GM12878 (cell line): ENCODE measurements at regions of chr2 and their contacts with region 1.

Region 1: GRCh38 chr2:109213646-109214417 is 84.8 kb downstream of the SH3RF3 start:
- DNase-seq: peak; percentile 82
- ATAC-seq: peak; percentile 77
- H3K4me3 ChIP-seq: no peak overlapping the region
- H3K27ac ChIP-seq: no peak overlapping the region
- H3K4me1 ChIP-seq: peaks cover 39% of the 10 kb centered on the region
- H3K27me3 ChIP-seq: no peaks in the 10 kb centered on the region; a peak in 1 of 4 replicates
- CTCF ChIP-seq: no peak
- EP300 ChIP-seq: peak; percentile 77 to 92; a peak in 2 of 4 replicates
- POLR2A ChIP-seq: no peak
- RAD21 ChIP-seq: no peak

Region 2: DNA sequence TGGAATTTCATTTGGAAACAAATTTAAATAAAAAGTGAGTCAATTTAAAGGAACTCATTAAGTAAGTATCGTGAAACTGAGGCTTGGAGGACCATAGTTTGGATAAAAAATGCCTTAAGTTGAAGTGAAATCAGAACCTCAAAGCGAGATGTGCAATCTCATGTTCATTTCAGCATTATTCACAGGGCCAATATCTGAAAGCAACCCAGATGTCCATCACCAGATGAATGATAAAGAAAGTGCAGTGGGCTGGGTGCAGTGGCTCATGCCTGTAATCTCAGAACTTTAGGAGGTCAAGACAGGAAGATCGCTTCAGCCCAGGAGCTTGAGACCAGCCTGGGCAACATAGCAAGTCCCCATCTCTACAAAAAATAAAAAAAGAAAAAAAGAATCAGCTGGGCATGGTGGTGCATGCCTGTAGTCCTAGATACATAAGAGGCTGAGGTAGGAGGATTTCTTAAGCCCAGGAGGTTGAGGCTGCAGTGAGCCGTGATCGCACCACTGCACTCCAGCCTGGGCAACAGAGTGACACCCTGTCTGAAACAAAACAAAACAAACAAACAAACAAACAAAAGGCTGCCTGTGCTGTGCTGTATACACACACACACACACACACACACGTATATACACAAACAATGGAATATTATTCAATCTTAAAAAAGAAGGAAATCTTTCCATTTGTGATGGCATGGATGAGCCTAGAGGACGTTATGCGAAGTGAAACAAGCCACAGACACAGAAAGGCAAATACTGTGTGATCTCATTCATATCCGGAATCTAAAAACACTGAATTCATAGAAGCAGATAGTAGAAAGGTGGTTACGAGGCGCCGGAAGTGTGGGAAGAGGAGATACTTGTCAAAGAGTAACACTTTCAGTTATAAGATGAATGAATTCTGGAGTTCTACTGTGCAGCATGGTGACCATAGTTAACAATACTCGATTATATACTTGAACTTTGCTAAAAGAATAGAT is 70.3 kb before region 1 on chr2:
- CTCF ChIA-PET with region 1: interaction called, 4 read pairs
- POLR2A ChIA-PET with region 1: interaction called, 3 read pairs
- RAD21 ChIA-PET with region 1: interaction called, 7 read pairs
- SMC1A ChIA-PET with region 1: interaction called, 8 read pairs
- in situ Hi-C with region 1: no loop called
- intact Hi-C with region 1: loop called (anchors 2 kb)
- DNase-seq: peak; percentile 66
- ATAC-seq: peak; percentile 92
- H3K4me3 ChIP-seq: peak overlapping the region; percentile 38; the same call in 1 of the 2 replicates
- H3K27ac ChIP-seq: no peak overlapping the region; the same call in 1 of the 2 replicates
- H3K4me1 ChIP-seq: peaks cover 27% of the 10 kb centered on the region
- H3K27me3 ChIP-seq: peaks cover 0 to 3% of the 10 kb centered on the region in 2 experiments; a peak in 2 of 4 replicates
- CTCF ChIP-seq: no peak
- EP300 ChIP-seq: peak; percentile 56 to 80; a peak in 3 of 4 replicates
- POLR2A ChIP-seq: no peak
- RAD21 ChIP-seq: 0 out of 2 replicates have a peak, but pooled peaks have one; percentile 5

Region 3: DNA sequence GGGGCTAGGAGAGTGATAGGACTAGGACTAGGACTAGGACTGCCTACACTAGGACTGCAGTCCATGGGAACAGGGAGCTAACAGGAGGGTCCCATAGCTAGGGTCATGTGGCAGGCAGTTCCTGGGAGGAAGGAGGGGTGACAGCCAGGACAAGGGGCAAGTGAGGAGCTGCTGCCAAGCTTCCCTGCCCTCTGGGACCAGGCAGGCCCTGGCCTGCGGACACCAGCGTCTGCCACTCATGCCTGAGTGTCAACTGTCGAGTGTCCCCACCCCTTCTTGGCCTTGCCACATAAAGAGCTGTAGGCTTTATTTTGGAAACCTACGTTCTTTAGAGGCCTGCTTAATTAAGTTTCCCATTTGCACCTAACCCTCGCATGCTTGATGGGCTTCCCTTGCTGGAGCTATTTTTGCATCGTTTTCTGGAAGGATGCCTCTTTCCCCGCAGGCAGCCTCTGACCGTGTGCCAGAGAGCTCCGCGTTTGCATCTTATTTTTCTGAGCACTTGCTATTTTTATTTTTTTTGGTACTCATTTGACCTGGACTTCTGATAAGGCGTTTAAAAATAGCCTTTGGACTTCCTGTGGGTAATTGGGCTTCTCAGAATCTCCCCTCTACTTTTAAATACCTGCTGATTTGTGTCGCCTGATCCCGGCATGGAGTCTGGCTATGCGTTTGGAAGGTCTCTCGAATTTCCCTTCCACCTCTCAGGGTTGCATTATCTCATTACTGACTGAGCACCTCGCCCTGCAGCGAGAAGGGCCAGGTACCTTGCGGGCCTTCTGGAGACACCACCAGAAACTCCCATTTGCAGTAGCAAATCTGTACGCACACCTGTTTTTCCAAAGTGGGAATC is 18.4 kb before region 1 on chr2:
- CTCF ChIA-PET with region 1: interaction called, 6 read pairs
- POLR2A ChIA-PET with region 1: interaction called, 3 read pairs
- RAD21 ChIA-PET with region 1: interaction called, 8 read pairs
- SMC1A ChIA-PET with region 1: interaction called, 13 read pairs
- in situ Hi-C with region 1: no loop called
- intact Hi-C with region 1: no loop called
- DNase-seq: no peak
- ATAC-seq: peak; percentile 20
- H3K4me3 ChIP-seq: no peak overlapping the region
- H3K27ac ChIP-seq: no peak overlapping the region
- H3K4me1 ChIP-seq: peaks cover 28% of the 10 kb centered on the region
- H3K27me3 ChIP-seq: no peaks in the 10 kb centered on the region
- CTCF ChIP-seq: no peak
- EP300 ChIP-seq: no peak
- POLR2A ChIP-seq: no peak
- RAD21 ChIP-seq: no peak

Region 4: GRCh38 chr2:109230941-109231420 is 17.1 kb after region 1 on chr2:
- CTCF ChIA-PET with region 1: interaction called, 13 read pairs
- POLR2A ChIA-PET with region 1: interaction called, 5 read pairs
- RAD21 ChIA-PET with region 1: interaction called, 20 read pairs
- SMC1A ChIA-PET with region 1: interaction called, 41 read pairs
- in situ Hi-C with region 1: no loop called
- intact Hi-C with region 1: no loop called
- DNase-seq: no peak
- ATAC-seq: 0 out of 3 replicates have a peak, but pooled peaks have one; percentile 10
- H3K4me3 ChIP-seq: no peak overlapping the region
- H3K27ac ChIP-seq: no peak overlapping the region
- H3K4me1 ChIP-seq: peaks cover 15% of the 10 kb centered on the region
- H3K27me3 ChIP-seq: no peaks in the 10 kb centered on the region
- CTCF ChIP-seq: no peak
- EP300 ChIP-seq: no peak
- POLR2A ChIP-seq: no peak
- RAD21 ChIP-seq: no peak

Region 5: GRCh38 chr2:109238580-109238979 is 24.7 kb after region 1 on chr2:
- CTCF ChIA-PET with region 1: interaction called, 5 read pairs
- POLR2A ChIA-PET with region 1: interaction called, 8 read pairs
- RAD21 ChIA-PET with region 1: interaction called, 25 read pairs
- SMC1A ChIA-PET with region 1: interaction called, 41 read pairs
- in situ Hi-C with region 1: no loop called
- intact Hi-C with region 1: no loop called
- DNase-seq: peak; percentile 59
- ATAC-seq: peak; percentile 97
- H3K4me3 ChIP-seq: no peak overlapping the region
- H3K27ac ChIP-seq: no peak overlapping the region
- H3K4me1 ChIP-seq: peaks cover 11% of the 10 kb centered on the region
- H3K27me3 ChIP-seq: no peaks in the 10 kb centered on the region
- CTCF ChIP-seq: no peak
- EP300 ChIP-seq: peak; percentile 15 to 42; a peak in 2 of 4 replicates
- POLR2A ChIP-seq: no peak
- RAD21 ChIP-seq: peak; percentile 15; the same call in 1 of the 2 replicates

Region 6: GRCh38 chr2:109254174-109254904 is 40.5 kb after region 1 on chr2:
- CTCF ChIA-PET with region 1: interaction called, 4 read pairs
- POLR2A ChIA-PET with region 1: interaction called, 3 read pairs
- RAD21 ChIA-PET with region 1: interaction called, 10 read pairs
- SMC1A ChIA-PET with region 1: interaction called, 19 read pairs
- in situ Hi-C with region 1: no loop called
- intact Hi-C with region 1: loop called (anchors 1 kb)
- DNase-seq: peak; percentile 94
- ATAC-seq: peak; percentile 84
- H3K4me3 ChIP-seq: no peak overlapping the region
- H3K27ac ChIP-seq: peak overlapping the region; percentile 62
- H3K4me1 ChIP-seq: peaks cover 29% of the 10 kb centered on the region
- H3K27me3 ChIP-seq: no peaks in the 10 kb centered on the region
- CTCF ChIP-seq: no peak
- EP300 ChIP-seq: peak; percentile 23 to 27; a peak in 1 of 4 replicates
- POLR2A ChIP-seq: no peak
- RAD21 ChIP-seq: no peak

Region 7: GRCh38 chr2:109331896-109332848 is 118.3 kb after region 1 on chr2:
- CTCF ChIA-PET with region 1: interaction called, 5 read pairs
- POLR2A ChIA-PET with region 1: no interaction called
- RAD21 ChIA-PET with region 1: interaction called, 8 read pairs
- SMC1A ChIA-PET with region 1: interaction called, 7 read pairs
- in situ Hi-C with region 1: no loop called
- intact Hi-C with region 1: loop called (anchors 10 kb)
- DNase-seq: no peak
- ATAC-seq: peak; percentile 73
- H3K4me3 ChIP-seq: peak overlapping the region; percentile 63
- H3K27ac ChIP-seq: peak overlapping the region; percentile 48; the same call in 1 of the 2 replicates
- H3K4me1 ChIP-seq: peaks cover 35% of the 10 kb centered on the region
- H3K27me3 ChIP-seq: no peaks in the 10 kb centered on the region
- CTCF ChIP-seq: no peak
- EP300 ChIP-seq: no peak
- POLR2A ChIP-seq: no peak
- RAD21 ChIP-seq: no peak

Region 8: DNA sequence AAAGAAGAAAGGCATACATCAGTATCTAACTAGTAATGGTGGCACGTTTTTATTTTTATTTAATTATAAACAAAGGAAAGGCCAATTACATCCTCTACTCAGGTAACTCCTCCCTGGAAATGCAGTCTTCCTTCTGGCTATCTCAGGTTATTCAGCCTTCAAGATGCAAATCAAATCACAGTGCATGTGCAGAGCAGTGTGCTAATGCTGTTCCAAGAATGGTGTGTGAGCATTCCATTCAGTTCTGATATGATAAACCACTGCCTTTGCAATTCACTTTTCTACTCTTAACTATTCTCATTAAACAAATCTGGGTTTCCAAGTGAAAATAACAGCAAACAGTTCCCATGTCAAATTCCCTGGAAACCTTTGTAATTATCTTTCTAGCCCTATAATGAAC is 361.5 kb after region 1 on chr2:
- CTCF ChIA-PET with region 1: no interaction called
- POLR2A ChIA-PET with region 1: no interaction called
- RAD21 ChIA-PET with region 1: no interaction called
- SMC1A ChIA-PET with region 1: no interaction called
- in situ Hi-C with region 1: no loop called
- intact Hi-C with region 1: no loop called
- DNase-seq: no peak
- ATAC-seq: no peak
- H3K4me3 ChIP-seq: no peak overlapping the region
- H3K27ac ChIP-seq: no peak overlapping the region
- H3K4me1 ChIP-seq: no peaks in the 10 kb centered on the region
- H3K27me3 ChIP-seq: no peaks in the 10 kb centered on the region
- CTCF ChIP-seq: no peak
- EP300 ChIP-seq: no peak
- POLR2A ChIP-seq: no peak
- RAD21 ChIP-seq: no peak